AG04450 (cell line): ENCODE measurements at regions of chr2 and their contacts with region 1.

Region 1: GRCh38 chr2:165953655-165954606 is at the start of gene TTC21B:
- DNase-seq: peak; percentile 87
- H3K4me3 ChIP-seq: peak within 1 kb of the TSS; percentile 74
- H3K27ac ChIP-seq: peak within 1 kb of the TSS; percentile 83
- H3K27me3 ChIP-seq: no peaks in the 10 kb centered on the region
- CTCF ChIP-seq: peak; percentile 84
- polyA plus RNA-seq, gene TTC21B: 11.1 and 12.1 TPM in 2 replicates

Region 2: GRCh38 chr2:165743442-165743841 is 210.5 kb before region 1 on chr2:
- CTCF ChIA-PET with region 1: no interaction called
- POLR2A ChIA-PET with region 1: no interaction called
- DNase-seq: no peak
- H3K4me3 ChIP-seq: no peak overlapping the region
- H3K27ac ChIP-seq: no peak overlapping the region
- H3K27me3 ChIP-seq: no peaks in the 10 kb centered on the region
- CTCF ChIP-seq: no peak

Region 3: GRCh38 chr2:165863810-165864261 is 90.1 kb before region 1 on chr2:
- CTCF ChIA-PET with region 1: interaction called, 10 read pairs
- POLR2A ChIA-PET with region 1: no interaction called
- DNase-seq: no peak
- H3K4me3 ChIP-seq: no peak overlapping the region
- H3K27ac ChIP-seq: no peak overlapping the region
- H3K27me3 ChIP-seq: no peaks in the 10 kb centered on the region
- CTCF ChIP-seq: no peak